ENCODE measurements at regions of chr17 and their contacts with region 1.

Region 1: GRCh38 chr17:40038882-40039513 is 15.2 kb downstream of the MED24 start:
- DNase-seq: peak in 1 of 3 donors; percentile 59
- ATAC-seq: peak; percentile 68
- H3K4me3 ChIP-seq: no peak overlapping the region
- H3K4me1 ChIP-seq: peaks cover 8% of the 10 kb centered on the region
- CTCF ChIP-seq: no peak

Region 2: DNA sequence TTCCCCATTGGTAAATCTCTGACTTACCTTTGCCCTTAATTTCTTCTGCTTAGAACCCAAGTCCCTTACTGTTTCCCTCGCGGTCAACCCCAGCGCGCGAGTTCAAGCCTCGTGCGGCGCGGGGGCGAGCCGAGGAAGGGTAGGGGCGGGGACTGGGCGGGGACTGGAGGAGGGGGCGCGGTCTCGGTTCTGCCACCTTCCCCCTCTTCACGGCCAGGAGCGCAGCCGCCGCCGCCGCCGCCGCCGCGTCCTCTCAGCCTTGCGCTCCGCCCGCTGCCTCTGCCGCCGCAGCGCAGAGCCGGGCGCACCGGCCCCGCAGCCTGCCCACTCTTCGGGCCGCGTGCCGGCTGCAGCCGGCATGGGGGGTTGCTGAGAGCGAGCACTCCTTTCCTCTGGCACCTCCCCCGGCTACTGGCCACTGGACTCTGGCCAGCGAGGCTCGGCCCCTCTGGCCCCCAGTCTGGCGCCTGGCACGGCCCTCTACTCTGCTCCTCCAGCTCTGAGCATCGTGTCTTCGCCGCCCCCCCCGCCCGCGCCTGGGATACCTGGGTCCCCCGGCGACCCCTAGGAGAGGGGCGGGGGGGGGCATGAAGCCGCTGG is 138.4 kb after region 1 on chr17 and contains the start of gene RAPGEFL1:
- intact Hi-C with region 1: loop called in 1 of 2 experiments (anchors 10 kb)
- DNase-seq: peak; percentile 91 to 93 (median 93)
- ATAC-seq: peak; percentile 68
- H3K4me3 ChIP-seq: peak within 1 kb of the TSS; percentile 68
- H3K4me1 ChIP-seq: peaks cover 29% of the 10 kb centered on the region
- CTCF ChIP-seq: no peak
- total RNA-seq, gene RAPGEFL1: 76.8 to 177 (median 147) TPM